PC-3 (cell line): ENCODE measurements at regions of chr16 and their contacts with region 1.

Region 1: DNA sequence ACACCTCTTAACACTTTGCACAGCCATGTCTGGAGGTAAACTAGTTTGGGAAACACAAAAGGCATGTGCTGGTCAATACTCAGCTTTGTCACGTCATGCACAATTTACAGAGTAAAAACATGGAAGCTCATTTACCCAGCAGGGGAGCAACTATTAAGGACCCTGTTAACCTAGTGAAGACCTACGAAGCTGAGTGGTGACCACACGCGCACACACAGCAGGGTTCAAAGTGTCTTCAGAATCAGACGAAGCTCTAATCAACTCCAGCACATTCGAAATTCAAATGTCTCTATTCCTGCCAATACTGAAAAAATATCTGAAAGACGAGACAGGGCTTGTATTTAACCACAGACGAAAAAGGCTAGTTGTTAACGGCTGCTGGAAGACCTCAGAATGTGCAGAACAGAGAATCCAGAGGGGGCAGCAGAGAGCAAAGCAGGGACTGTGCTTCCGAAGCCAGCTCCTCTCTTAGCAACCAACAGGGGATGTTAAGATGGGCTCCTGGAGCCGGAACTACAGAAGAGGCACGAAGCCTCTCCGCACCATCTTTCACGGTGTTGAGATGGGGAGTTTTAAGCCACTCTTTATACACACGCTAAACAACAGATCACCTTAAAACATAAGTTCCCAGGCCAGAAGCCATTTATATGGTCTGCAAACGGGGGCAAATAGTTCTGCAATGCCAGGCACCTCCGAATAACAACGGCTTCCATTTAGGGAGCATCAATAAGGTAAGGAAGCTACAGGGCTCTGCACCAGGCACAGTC is 45.7 kb downstream of the CMTM4 start:
- DNase-seq: peak; percentile 71
- ATAC-seq: peak; percentile 89
- H3K4me3 ChIP-seq: no peak overlapping the region
- H3K27ac ChIP-seq: no peak overlapping the region
- H3K4me1 ChIP-seq: no peaks in the 10 kb centered on the region
- H3K27me3 ChIP-seq: no peaks in the 10 kb centered on the region
- CTCF ChIP-seq: peak; percentile 86

Region 2: DNA sequence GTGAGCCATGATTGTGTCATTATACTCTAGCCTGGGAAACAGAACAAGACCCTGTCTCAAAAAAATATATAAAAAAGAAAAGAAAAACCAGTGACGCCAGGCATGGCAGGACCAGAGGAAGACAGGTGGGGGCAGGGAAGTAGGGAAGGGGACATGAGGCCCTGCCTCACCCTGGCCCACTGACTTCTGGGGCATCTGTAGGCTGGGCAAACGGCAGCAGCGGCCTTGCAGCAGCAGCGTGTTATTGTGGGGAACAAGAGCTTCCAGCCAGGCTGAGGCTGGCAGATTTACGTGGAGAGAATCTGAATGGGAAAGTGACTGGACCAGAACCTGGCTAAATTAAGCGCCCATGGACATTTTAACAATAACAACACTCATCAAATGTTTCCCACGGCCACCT is 26.3 kb after region 1 on chr16:
- CTCF ChIA-PET with region 1: no interaction called
- POLR2A ChIA-PET with region 1: interaction called, 25 read pairs
- intact Hi-C with region 1: no loop called
- DNase-seq: no peak
- ATAC-seq: no peak
- H3K4me3 ChIP-seq: no peak overlapping the region
- H3K27ac ChIP-seq: no peak overlapping the region
- H3K4me1 ChIP-seq: peaks cover 8% of the 10 kb centered on the region
- H3K27me3 ChIP-seq: no peaks in the 10 kb centered on the region
- CTCF ChIP-seq: no peak

Region 3: DNA sequence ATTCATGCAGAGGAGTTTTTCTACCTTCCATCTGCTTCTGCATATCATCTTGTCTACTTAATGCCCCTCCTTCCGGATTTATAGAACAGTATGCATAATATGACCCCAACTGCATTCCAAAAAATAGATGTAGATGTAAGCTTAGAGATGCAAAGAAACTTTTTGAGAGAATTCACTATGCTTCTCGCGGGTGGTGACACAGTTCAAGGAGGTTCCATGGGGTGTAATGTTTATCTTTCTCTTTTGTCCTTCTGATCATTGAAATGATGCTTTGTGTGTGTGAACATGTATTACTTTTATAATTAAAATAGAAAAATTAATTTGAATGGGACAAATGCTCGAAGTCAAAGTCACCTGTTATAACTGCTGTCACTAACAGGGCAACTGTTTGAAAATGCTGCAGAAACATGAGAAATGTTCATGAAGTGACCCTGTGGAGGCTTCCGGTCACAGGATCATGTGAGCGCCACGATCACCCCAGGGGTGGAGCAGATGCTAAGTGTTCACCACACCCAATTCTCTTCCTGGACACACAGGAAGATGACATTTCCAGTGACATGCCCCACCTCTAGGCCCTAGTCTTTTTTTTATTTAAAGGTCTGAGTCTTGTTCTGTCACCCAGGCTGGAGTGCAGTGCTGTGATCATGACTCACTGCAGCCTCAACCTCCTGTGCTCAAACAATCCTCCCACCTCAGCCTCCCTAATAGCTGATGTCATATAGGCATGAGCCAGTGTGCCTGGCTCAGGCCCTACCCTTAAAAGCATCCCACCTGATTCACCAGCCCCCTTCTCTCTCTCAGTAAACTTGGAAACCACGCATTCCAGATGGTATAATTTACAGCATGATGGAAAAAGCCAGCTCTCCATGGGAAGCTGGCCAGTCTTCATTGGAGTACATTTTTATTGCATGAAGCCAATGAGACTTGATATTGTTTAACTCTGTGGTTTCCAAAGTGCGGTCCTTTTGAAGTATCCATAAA is 853.4 kb after region 1 on chr16:
- CTCF ChIA-PET with region 1: no interaction called
- POLR2A ChIA-PET with region 1: no interaction called
- intact Hi-C with region 1: no loop called
- DNase-seq: peak; percentile 35
- ATAC-seq: peak; percentile 74
- H3K4me3 ChIP-seq: no peak overlapping the region
- H3K27ac ChIP-seq: no peak overlapping the region
- H3K4me1 ChIP-seq: no peaks in the 10 kb centered on the region; the same call in 1 of the 2 replicates
- H3K27me3 ChIP-seq: no peaks in the 10 kb centered on the region
- CTCF ChIP-seq: no peak